Gastrocnemius medialis (tissue), 4 donors: ENCODE measurements at regions of chr17 and their contacts with region 1.

Region 1: DNA sequence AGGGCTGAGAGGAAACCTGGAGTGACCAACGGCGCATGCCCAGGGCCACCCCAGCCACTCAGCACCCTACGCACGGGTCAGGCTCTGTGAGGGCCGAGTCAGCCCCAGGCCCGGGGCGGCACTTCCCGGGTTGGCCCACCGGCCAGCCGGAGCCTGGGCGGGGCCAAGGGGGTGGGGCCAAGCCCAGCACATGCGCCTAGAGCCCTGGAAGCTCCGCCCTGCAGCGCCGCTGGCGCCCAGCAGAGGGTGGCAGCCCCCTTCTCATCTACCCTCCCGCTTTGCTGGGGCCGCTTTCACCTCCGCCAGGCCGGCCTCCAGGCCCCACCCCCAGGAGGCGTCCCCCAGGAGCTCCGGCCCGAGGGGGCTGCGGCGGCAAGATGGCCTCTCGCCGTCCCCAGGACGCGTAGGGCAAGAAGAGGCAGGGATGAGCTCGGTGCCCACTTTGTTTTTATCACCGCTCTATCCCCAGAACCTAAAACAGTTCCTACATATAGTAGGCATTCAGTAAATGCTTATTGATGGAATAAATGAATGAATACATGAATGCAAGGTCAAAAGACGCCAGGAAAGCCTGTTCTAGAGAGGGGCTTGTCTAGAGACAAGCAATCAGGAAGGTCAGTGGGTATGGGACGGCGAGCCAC is 31.3 kb downstream of the MYO18A start:
- DNase-seq: peak; percentile 89 to 95
- ATAC-seq: peak; percentile 77 to 85
- H3K4me3 ChIP-seq: peak overlapping the region; percentile 61 to 80 (median 66)
- H3K27ac ChIP-seq: peak overlapping the region; percentile 82 to 98 (median 84)
- H3K4me1 ChIP-seq: peaks cover 27 to 38% of the 10 kb centered on the region in 2 donors
- H3K27me3 ChIP-seq: no peaks in the 10 kb centered on the region
- CTCF ChIP-seq: peak; percentile 97 to 100 (median 98)
- POLR2A ChIP-seq: peak; percentile 42 to 51

Region 2: DNA sequence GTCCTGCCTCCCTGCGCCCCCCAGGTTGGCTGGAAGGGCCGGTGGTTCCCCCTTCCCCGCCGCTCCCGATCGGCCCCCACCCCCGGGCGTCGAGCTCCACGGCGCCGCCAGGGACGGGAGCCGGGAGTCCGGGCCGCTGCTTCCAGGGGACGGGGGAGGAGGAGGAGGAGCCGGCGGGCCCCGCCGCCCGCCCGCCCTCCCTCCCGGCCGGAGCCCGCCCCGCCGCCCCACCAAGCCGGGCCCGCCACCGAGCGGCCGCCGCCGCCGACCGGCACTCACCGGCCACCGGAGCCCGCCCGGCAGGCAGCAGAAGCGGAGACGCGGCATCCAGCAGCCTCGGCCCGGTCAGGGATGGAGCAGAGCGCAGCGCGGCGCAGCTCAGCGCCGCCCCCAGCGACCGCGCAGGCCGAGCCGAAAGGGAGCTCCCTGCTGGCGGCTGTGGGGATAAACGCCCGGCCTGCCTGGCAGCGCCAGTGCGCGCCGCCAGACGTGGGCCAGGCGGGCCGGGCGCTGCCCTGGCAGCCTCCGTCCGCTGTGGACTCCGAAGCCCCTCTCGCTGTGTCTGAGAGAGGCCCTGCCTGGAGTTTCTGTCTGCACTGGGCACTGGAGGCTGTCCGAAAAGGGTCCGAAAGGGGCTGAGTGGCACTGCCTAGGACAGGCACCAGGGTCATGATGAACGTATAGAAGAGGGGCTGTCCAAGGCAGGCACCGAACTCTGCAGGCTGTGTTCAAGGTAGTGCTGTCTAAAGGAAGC is 31.3 kb after region 1 on chr17 and contains the start of gene MYO18A:
- in situ Hi-C with region 1: loop called in 1 of 4 experiments (anchors 5 kb)
- intact Hi-C with region 1: loop called (anchors 1 kb)
- DNase-seq: peak; percentile 39 to 64
- ATAC-seq: peak; percentile 78 to 85
- H3K4me3 ChIP-seq: peak within 1 kb of the TSS; percentile 60 to 71 (median 62)
- H3K27ac ChIP-seq: peak within 1 kb of the TSS; percentile 75 to 88 (median 83)
- H3K4me1 ChIP-seq: peaks cover 21 to 26% of the 10 kb centered on the region in 2 donors
- H3K27me3 ChIP-seq: no peaks in the 10 kb centered on the region
- CTCF ChIP-seq: peak; percentile 70 to 95 (median 91)
- POLR2A ChIP-seq: peak in 1 of 2 donors; percentile 20
- total RNA-seq, gene MYO18A: 526 to 1,058 (median 835) TPM

Region 3: GRCh38 chr17:29219378-29220047 is 70.6 kb after region 1 on chr17:
- in situ Hi-C with region 1: loop called in 3 of 4 experiments (anchors 5 to 10 kb)
- intact Hi-C with region 1: loop called (anchors 1 kb)
- DNase-seq: peak; percentile 26 to 49
- ATAC-seq: peak; percentile 77 to 80
- H3K4me3 ChIP-seq: no peak overlapping the region
- H3K27ac ChIP-seq: no peak overlapping the region
- H3K4me1 ChIP-seq: peaks cover 6 to 10% of the 10 kb centered on the region in 2 donors
- H3K27me3 ChIP-seq: no peaks in the 10 kb centered on the region
- CTCF ChIP-seq: peak; percentile 77 to 93 (median 89)
- POLR2A ChIP-seq: no peak

Region 4: DNA sequence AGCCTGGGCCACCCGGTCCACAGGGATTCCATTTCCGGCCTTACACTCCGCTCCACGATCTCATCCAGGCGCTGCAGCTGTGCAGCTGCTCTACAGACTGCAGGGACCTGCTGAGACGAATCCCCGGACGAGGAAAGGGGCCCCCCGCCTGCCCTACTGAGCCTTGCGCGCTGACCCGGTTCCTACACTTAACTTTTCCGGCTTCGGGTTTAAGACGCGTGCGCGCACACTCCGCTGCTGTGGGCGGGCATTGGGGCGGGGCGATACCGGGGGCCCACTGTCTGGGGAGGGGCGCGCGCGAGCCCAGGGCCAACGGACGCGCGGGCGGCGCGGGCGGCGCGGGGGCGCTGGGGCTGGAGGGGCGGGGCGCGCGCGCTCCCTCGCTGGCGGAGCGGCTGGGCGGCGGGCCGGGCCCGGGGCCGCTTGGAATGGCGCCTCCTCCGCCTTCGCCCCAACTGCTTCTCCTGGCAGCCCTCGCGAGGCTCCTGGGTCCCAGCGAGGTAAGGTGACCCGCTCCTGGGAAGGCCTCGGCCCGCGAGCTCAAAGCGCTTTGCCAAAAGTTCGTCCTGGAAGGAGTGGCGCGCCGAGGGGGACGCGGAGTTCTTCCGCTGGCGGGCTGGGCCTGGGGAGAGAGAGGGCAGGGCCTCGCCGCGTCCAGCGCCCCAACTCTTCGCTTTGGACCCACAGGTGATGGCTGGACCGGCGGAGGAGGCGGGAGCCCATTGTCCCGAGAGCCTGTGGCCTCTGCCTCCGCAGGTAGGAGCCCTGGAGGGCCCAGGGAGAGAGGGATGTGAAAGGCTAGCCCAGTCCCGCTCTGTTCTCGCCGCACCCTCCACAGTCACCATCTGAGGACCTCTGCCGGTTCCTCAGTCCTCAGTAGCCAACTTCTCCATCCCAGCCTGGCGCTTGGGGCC is 419.7 kb after region 1 on chr17 and contains the start of gene TP53I13:
- in situ Hi-C with region 1: no loop called
- intact Hi-C with region 1: loop called (anchors 10 kb)
- DNase-seq: peak; percentile 62 to 76
- ATAC-seq: peak; percentile 61 to 69
- H3K4me3 ChIP-seq: peak within 1 kb of the TSS; percentile 66 to 82 (median 79)
- H3K27ac ChIP-seq: peak within 1 kb of the TSS; percentile 85 to 93 (median 86)
- H3K4me1 ChIP-seq: peaks cover 17 to 28% of the 10 kb centered on the region in 2 donors
- H3K27me3 ChIP-seq: peaks cover 0 to 5% (median 0%) of the 10 kb centered on the region in 3 donors
- CTCF ChIP-seq: no peak
- POLR2A ChIP-seq: peak; percentile 66 to 86
- total RNA-seq, gene TP53I13: 31.0 to 50.2 (median 32.1) TPM